ENCODE measurements at regions of chr1 and their contacts with region 1.

Region 1: DNA sequence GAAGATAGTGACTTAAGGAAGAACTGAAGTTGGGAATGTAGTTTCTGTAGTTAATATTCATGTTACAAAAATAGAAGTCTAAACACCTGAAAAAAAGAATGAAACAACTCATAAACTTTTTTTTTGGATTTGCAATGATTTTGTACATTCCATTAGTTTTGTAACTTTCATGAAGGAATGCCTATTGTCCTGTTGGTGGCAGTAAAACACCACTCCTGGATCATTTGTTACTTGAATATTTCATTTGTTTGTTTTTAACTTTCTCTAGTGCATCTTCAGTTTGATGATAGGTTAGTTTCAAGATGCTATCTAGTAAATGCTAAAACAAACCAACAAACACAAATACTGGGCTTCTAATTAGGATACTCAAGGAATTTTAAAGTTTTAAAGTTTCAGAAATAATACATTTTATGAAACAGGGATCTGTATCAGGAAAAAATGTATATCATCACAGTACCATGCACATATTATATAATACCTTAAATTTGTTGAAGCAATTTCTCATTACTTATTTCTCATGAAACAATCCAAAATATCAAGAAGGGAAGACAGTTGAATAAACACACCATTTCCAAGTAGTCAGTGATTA is 229.7 kb upstream of the CACYBP start:
- DNase-seq: no peak
- ATAC-seq: no peak
- H3K4me3 ChIP-seq: no peak overlapping the region
- H3K27ac ChIP-seq: no peak overlapping the region
- H3K4me1 ChIP-seq: no peaks in the 10 kb centered on the region
- H3K27me3 ChIP-seq: no peaks in the 10 kb centered on the region
- CTCF ChIP-seq: peak; percentile 69

Region 2: GRCh38 chr1:174982971-174983689 is 213.1 kb after region 1 on chr1:
- intact Hi-C with region 1: loop called (anchors 2 to 10 kb)
- DNase-seq: no peak
- ATAC-seq: no peak
- H3K4me3 ChIP-seq: no peak overlapping the region
- H3K27ac ChIP-seq: no peak overlapping the region
- H3K4me1 ChIP-seq: no peaks in the 10 kb centered on the region
- H3K27me3 ChIP-seq: no peaks in the 10 kb centered on the region
- CTCF ChIP-seq: peak; percentile 67

Region 3: DNA sequence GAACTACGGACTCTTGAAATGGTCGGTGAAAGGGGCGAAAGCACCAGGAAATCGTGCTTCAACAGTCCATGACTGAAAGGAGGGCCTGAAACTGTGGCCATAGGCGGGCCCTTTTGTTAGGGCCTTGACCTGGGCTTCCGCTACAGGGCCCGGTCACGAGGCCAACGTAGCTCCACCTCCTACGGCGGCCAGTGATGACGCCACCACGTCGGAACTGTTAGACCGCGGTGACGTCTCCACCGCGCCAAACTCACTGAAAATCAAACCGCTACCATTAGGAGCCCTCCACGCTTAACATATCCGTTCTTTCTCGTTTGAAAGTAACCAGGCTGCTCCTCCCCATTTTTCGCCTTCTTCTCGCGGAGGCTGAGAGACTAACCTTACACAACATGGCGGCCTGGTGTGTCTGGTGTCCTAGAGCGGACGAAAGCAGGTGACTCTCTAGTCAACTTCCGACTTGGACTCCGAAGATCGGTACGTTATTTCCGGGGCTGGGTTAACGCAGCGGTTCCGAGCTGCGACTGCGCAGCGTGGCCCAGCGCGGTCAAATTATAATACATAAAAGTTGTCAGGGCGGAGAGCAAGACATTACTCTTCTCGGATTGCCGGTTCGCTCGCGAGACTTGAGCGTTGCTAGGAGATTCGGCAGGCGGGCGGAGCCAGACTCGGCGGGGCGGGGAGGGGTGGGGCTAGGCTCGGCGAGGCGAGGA is 229.3 kb after region 1 on chr1:
- intact Hi-C with region 1: loop called in 1 of 2 experiments (anchors 5 kb)
- DNase-seq: peak; percentile 97 to 99
- ATAC-seq: peak; percentile 90 to 95 (median 92)
- H3K4me3 ChIP-seq: peak overlapping the region; percentile 89
- H3K27ac ChIP-seq: peak overlapping the region; percentile 97
- H3K4me1 ChIP-seq: peaks cover 28% of the 10 kb centered on the region
- H3K27me3 ChIP-seq: no peaks in the 10 kb centered on the region
- CTCF ChIP-seq: no peak

Region 4: GRCh38 chr1:175124861-175125260 is 354.8 kb after region 1 on chr1:
- intact Hi-C with region 1: loop called in 1 of 2 experiments (anchors 5 kb)
- DNase-seq: no peak
- ATAC-seq: peak in 1 of 4 donors; percentile 41
- H3K4me3 ChIP-seq: no peak overlapping the region
- H3K27ac ChIP-seq: no peak overlapping the region
- H3K4me1 ChIP-seq: no peaks in the 10 kb centered on the region
- H3K27me3 ChIP-seq: no peaks in the 10 kb centered on the region
- CTCF ChIP-seq: no peak

Region 5: DNA sequence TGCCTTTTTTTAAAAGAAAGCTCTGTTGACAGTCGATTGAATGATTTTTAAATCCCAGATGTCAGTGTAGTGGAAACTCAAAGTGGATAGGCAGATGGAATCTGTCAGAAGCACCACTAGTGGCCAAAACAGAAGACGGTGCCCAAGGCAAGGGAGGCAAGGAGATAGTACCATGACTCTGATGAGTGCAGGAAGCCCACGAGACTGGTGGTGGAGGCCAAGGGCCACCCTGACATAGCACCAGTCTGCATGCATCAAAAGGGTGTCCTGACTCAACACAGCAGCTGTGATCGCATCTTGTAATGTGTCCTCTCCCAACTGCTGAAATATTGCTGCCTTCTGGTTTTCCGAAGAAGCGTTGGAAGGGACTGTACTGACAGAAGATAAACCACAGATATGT is 1568.8 kb after region 1 on chr1:
- intact Hi-C with region 1: no loop called
- DNase-seq: no peak
- ATAC-seq: no peak
- H3K4me3 ChIP-seq: no peak overlapping the region
- H3K27ac ChIP-seq: no peak overlapping the region
- H3K4me1 ChIP-seq: no peaks in the 10 kb centered on the region
- H3K27me3 ChIP-seq: peaks cover 0 to 2% (median 0%) of the 10 kb centered on the region in 3 donors
- CTCF ChIP-seq: no peak

Measured in psoas muscle (tissue), 8 donors.